ENCODE measurements at regions of chr19 and their contacts with region 1.

Region 1: DNA sequence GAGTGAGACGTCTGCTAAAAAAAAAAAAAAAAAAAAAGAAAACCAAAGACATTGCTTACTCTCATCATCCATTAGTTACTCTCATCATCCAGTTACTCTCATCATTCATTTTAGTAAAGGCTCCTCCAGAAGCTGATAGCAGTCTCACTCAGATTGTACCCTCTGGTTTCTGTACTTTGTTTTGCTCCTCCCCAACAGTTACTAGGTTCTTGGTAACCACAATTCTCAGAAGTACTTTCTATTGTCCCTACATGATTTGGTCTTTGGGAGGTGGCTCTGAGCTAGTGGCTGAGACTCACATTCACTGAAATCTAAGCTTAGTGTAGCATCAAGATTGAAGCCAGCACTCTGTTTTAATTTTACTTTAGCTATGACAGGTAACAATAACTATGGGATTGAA is 14.3 kb downstream of the ERICH4 start:
- DNase-seq: peak; percentile 53
- ATAC-seq: peak; percentile 100
- H3K4me3 ChIP-seq: no peak overlapping the region
- H3K27ac ChIP-seq: no peak overlapping the region
- H3K4me1 ChIP-seq: peaks cover 33% of the 10 kb centered on the region
- H3K27me3 ChIP-seq: no peaks in the 10 kb centered on the region; a peak in 1 of 4 replicates
- CTCF ChIP-seq: no peak
- EP300 ChIP-seq: no peak
- POLR2A ChIP-seq: no peak
- RAD21 ChIP-seq: no peak

Region 2: GRCh38 chr19:41397086-41398049 is 59.9 kb before region 1 on chr19 and contains the starts of genes BCKDHA and EXOSC5:
- CTCF ChIA-PET with region 1: no interaction called
- POLR2A ChIA-PET with region 1: no interaction called
- RAD21 ChIA-PET with region 1: no interaction called
- SMC1A ChIA-PET with region 1: no interaction called
- in situ Hi-C with region 1: no loop called
- intact Hi-C with region 1: no loop called
- DNase-seq: peak; percentile 99
- ATAC-seq: peak; percentile 94
- H3K4me3 ChIP-seq: peak within 1 kb of the TSS; percentile 80
- H3K27ac ChIP-seq: peak within 1 kb of the TSS; percentile 99
- H3K4me1 ChIP-seq: peaks cover 21% of the 10 kb centered on the region
- H3K27me3 ChIP-seq: no peaks in the 10 kb centered on the region
- CTCF ChIP-seq: no peak
- EP300 ChIP-seq: no peak
- POLR2A ChIP-seq: peak; percentile 78
- RAD21 ChIP-seq: no peak
- polyA plus RNA-seq, gene BCKDHA: 9.9 to 28.7 TPM
- polyA plus RNA-seq, gene EXOSC5: 20.6 to 25.3 TPM

Region 3: GRCh38 chr19:41541990-41542584 is 84.8 kb after region 1 on chr19:
- CTCF ChIA-PET with region 1: interaction called, 157 read pairs
- POLR2A ChIA-PET with region 1: no interaction called
- RAD21 ChIA-PET with region 1: interaction called, 5 read pairs
- SMC1A ChIA-PET with region 1: interaction called, 6 read pairs
- in situ Hi-C with region 1: no loop called
- intact Hi-C with region 1: no loop called
- DNase-seq: no peak
- ATAC-seq: peak; percentile 49; the same call in 2 of the 3 replicates
- H3K4me3 ChIP-seq: no peak overlapping the region
- H3K27ac ChIP-seq: no peak overlapping the region
- H3K4me1 ChIP-seq: peaks cover 26% of the 10 kb centered on the region
- H3K27me3 ChIP-seq: no peaks in the 10 kb centered on the region
- CTCF ChIP-seq: peak; percentile 69 to 74 (median 71)
- EP300 ChIP-seq: no peak
- POLR2A ChIP-seq: no peak
- RAD21 ChIP-seq: peak; percentile 85

Region 4: DNA sequence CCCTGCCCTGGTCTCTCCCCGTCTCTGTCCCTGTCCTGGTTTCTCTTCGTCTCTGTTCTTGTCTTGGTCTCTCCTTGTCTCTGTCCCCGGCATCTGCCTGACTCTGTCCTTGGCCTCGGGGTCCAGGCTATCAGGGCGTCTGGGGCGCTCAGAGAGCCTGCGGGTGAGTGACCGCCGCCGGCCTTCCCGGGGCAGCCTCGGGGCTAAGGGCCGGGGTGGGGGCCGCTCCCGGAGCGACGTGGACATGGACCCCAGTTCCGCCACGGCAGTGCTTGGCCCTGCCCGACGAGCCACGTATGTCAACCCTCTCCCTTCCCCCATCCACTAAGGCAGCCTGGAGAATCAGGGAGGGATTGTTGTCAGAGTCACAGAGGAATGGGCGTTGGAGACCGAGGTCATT is 440.6 kb after region 1 on chr19:
- CTCF ChIA-PET with region 1: no interaction called
- POLR2A ChIA-PET with region 1: interaction called, 10 read pairs
- RAD21 ChIA-PET with region 1: no interaction called
- SMC1A ChIA-PET with region 1: no interaction called
- in situ Hi-C with region 1: no loop called
- intact Hi-C with region 1: no loop called
- DNase-seq: no peak
- ATAC-seq: no peak
- H3K4me3 ChIP-seq: no peak overlapping the region
- H3K27ac ChIP-seq: no peak overlapping the region
- H3K4me1 ChIP-seq: no peaks in the 10 kb centered on the region
- H3K27me3 ChIP-seq: no peaks in the 10 kb centered on the region
- CTCF ChIP-seq: no peak
- EP300 ChIP-seq: no peak
- POLR2A ChIP-seq: peak; percentile 28; the same call in 1 of the 2 replicates
- RAD21 ChIP-seq: no peak

Measured in GM12878 (cell line).